Adrenal gland (tissue), 19 donors: ENCODE measurements at regions of chr10 and their contacts with region 1.

Region 1: DNA sequence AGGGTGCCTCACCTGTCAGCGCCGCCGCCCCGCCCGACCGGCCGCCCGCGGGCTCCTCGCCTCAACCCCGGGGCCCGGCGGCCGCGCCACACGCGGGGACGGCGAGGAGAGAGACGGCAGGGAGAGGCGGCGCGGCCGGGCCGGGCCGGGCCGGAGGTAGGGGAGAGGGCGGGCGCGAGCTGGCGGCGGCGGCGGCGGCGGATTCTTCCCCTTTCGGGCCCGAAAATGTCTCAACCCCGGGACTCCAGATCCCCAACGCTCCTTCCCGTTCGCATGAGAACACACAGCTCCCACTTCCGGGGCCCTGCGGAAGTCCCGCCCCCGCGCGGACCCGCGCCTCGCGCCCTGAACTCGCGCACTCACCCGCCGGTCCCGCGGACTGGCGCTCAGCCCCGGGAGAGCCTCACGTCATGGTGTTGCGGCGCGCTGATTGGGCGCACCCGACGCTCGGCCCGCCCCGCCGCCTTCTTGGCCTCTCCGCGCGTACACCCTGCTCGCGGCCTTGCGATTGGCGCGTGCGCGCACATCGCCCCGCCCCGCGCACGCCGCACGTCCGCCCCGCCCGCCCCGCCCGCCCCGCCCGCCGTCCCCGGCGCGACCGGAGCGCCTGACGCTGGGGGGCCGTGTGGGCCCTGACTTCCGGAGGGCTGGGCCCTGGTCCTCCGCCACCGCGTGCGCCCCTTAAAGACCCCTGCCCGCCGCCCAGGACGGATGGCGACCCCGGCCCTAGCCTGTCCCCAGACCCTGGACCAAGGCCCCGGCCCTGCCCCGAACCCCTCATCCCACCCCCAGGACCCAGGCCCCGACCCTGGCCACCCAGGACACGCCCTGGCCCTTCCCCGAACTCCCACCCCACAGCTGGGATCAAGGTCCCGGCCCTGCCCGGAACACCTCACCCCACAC is at the start of gene LARP4B:
- DNase-seq: peak; percentile 96 to 98 (median 97)
- H3K4me3 ChIP-seq: peak within 1 kb of the TSS in 3 of 4 donors; percentile 8 to 95 (median 70)
- H3K27ac ChIP-seq: peak within 1 kb of the TSS; percentile 74 to 100 (median 92)
- H3K4me1 ChIP-seq: peaks cover 21 to 30% of the 10 kb centered on the region in 2 donors
- H3K27me3 ChIP-seq: no peaks in the 10 kb centered on the region
- CTCF ChIP-seq: no peak
- POLR2A ChIP-seq: peak; percentile 80 to 96
- total RNA-seq, gene LARP4B: 33.7 to 145 (median 80.0) TPM

Region 2: GRCh38 chr10:987870-988666 is 56.4 kb after region 1 on chr10 and contains the start of gene GTPBP4:
- intact Hi-C with region 1: loop called in 1 of 2 experiments (anchors 10 kb)
- DNase-seq: peak; percentile 98 to 100 (median 99)
- H3K4me3 ChIP-seq: peak within 1 kb of the TSS; percentile 65 to 89 (median 74)
- H3K27ac ChIP-seq: peak within 1 kb of the TSS; percentile 75 to 94 (median 86)
- H3K4me1 ChIP-seq: peaks cover 12 to 28% of the 10 kb centered on the region in 2 donors
- H3K27me3 ChIP-seq: no peaks in the 10 kb centered on the region
- CTCF ChIP-seq: no peak
- POLR2A ChIP-seq: peak; percentile 76 to 94
- total RNA-seq, gene GTPBP4: 15.2 to 134 (median 33.0) TPM